Panc1 (cell line): ENCODE measurements at regions of chr1 and their contacts with region 1.

Region 1: DNA sequence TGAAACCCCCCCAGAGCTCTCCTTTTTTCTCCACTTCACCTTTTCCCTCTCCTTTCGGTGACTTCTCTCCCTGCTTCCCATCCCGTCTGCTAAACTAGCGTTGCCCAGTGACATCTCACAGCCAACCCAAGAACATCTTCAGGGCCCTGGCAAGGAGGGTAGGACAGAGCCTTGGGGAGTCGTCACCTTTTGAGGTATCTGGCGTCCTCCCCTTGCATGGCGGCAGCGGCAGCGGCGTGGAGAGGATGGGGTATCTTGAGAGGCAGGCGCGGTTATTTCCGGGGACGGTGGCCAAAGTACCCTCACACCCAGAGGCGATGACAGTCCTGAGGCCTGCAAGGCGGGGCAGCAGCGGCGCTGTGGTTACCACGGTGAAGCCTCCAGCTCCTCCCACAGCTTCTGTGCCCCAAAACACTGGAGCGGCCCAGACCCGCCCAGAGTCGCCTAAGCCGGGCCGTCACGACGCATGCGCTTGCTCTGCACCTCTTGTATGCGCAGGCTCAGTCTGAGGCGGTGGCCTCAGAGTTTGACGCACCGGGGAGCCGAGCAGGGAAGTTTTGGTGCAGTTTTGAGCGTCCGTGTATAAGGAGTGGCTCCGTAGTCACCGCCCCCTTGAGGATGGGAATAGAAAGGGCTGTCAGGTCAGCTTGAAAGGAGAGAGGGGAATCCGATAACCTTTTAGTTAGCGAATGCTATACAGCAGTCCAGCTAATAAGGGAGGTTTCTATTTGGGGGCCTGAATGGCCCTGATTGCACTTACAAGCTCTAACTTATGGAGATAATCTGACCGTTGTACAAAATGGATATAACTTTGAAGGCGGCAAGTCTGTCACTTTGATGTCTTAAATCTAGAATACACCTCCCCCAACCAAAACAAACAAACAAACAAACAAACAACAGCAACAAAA is at the start of gene KIFAP3:
- DNase-seq: peak; percentile 96
- ATAC-seq: peak; percentile 100
- H3K4me3 ChIP-seq: peak within 1 kb of the TSS; percentile 96 to 99
- H3K27ac ChIP-seq: peak within 1 kb of the TSS; percentile 81
- H3K4me1 ChIP-seq: peaks cover 10% of the 10 kb centered on the region
- H3K27me3 ChIP-seq: no peaks in the 10 kb centered on the region
- CTCF ChIP-seq: peak; percentile 75
- total RNA-seq, gene KIFAP3: 20.0 TPM

Region 2: GRCh38 chr1:169694304-169695075 is 380.0 kb before region 1 on chr1:
- CTCF ChIA-PET with region 1: no interaction called
- POLR2A ChIA-PET with region 1: no interaction called
- in situ Hi-C with region 1: no loop called
- intact Hi-C with region 1: no loop called
- DNase-seq: no peak
- ATAC-seq: no peak
- H3K4me3 ChIP-seq: no peak overlapping the region
- H3K27ac ChIP-seq: no peak overlapping the region
- H3K4me1 ChIP-seq: no peaks in the 10 kb centered on the region
- H3K27me3 ChIP-seq: no peaks in the 10 kb centered on the region
- CTCF ChIP-seq: no peak; the same call in 1 of the 2 replicates

Region 3: GRCh38 chr1:170063109-170063826 is 11.2 kb before region 1 on chr1:
- CTCF ChIA-PET with region 1: no interaction called
- POLR2A ChIA-PET with region 1: interaction called, 12 read pairs
- in situ Hi-C with region 1: no loop called
- intact Hi-C with region 1: no loop called
- DNase-seq: no peak
- ATAC-seq: no peak
- H3K4me3 ChIP-seq: no peak overlapping the region
- H3K27ac ChIP-seq: no peak overlapping the region
- H3K4me1 ChIP-seq: no peaks in the 10 kb centered on the region
- H3K27me3 ChIP-seq: no peaks in the 10 kb centered on the region
- CTCF ChIP-seq: no peak

Region 4: GRCh38 chr1:170097449-170097948 is 23.0 kb after region 1 on chr1:
- CTCF ChIA-PET with region 1: no interaction called
- POLR2A ChIA-PET with region 1: no interaction called
- in situ Hi-C with region 1: no loop called
- intact Hi-C with region 1: no loop called
- DNase-seq: no peak
- ATAC-seq: peak; percentile 78; the same call in 1 of the 2 replicates
- H3K4me3 ChIP-seq: no peak overlapping the region; a peak in 1 of 4 replicates
- H3K27ac ChIP-seq: no peak overlapping the region
- H3K4me1 ChIP-seq: peaks cover 12% of the 10 kb centered on the region
- H3K27me3 ChIP-seq: no peaks in the 10 kb centered on the region
- CTCF ChIP-seq: no peak